CD4-positive, alpha-beta memory T cell (primary cell): ENCODE measurements at regions of chr19 and their contacts with region 1.

Region 1: DNA sequence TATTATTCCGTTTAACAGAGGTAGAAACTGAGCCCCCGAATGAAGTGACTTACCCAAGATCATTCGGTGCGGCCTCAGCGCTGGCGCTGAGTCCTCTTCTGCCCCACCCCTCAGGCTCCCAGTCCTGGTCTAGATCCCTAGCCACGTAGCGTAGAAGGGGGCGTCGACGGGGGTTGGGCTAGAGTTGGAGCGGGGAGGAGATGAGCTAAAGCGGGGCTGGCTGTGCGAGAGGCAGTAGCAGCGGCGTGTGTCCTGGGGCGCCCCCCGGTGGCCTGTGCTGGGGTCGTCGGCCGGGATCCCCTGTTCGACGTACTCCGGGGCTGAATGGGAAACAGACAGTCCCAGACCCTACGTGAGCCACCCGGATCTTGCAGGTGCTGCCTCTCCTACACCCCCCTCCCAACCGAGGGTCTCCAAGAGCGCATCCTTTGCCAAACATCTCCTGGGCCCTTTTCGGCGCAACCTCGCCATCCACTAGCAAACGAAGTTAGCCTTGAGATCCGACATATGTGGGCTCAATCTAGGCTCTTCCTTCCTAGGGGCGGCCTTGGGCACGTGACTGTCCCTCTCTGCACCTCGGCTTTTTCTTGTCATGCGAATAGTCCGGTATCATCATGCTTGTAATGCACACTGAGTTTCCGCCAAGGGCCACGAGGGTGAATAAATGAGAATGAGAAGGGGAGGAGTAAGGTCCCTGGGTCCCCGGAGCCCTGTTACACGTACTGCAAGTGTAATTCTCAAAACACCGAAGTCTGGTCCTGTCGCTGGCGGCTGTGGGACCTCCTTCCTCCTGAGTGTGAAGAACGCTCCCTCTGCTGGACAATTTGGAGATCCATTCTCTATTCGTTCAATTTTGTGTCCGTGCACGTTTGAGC is 47.7 kb downstream of the CYP4F22 start:
- DNase-seq: peak; percentile 92 to 97 (median 93)
- H3K4me3 ChIP-seq: peak overlapping the region; percentile 72 to 73
- H3K4me3 Mint-ChIP-seq: peak overlapping the region; percentile 78 to 90 (median 84)
- H3K27ac ChIP-seq: peak overlapping the region; percentile 58
- H3K27ac Mint-ChIP-seq: peak overlapping the region; percentile 81 to 96 (median 94)
- H3K4me1 ChIP-seq: peaks cover 21% of the 10 kb centered on the region
- H3K4me1 Mint-ChIP-seq: peaks cover 11 to 31% (median 20%) of the 10 kb centered on the region in 4 donors
- H3K27me3 ChIP-seq: no peaks in the 10 kb centered on the region
- H3K27me3 Mint-ChIP-seq: peaks cover 0 to 4% of the 10 kb centered on the region in 2 donors

Region 2: DNA sequence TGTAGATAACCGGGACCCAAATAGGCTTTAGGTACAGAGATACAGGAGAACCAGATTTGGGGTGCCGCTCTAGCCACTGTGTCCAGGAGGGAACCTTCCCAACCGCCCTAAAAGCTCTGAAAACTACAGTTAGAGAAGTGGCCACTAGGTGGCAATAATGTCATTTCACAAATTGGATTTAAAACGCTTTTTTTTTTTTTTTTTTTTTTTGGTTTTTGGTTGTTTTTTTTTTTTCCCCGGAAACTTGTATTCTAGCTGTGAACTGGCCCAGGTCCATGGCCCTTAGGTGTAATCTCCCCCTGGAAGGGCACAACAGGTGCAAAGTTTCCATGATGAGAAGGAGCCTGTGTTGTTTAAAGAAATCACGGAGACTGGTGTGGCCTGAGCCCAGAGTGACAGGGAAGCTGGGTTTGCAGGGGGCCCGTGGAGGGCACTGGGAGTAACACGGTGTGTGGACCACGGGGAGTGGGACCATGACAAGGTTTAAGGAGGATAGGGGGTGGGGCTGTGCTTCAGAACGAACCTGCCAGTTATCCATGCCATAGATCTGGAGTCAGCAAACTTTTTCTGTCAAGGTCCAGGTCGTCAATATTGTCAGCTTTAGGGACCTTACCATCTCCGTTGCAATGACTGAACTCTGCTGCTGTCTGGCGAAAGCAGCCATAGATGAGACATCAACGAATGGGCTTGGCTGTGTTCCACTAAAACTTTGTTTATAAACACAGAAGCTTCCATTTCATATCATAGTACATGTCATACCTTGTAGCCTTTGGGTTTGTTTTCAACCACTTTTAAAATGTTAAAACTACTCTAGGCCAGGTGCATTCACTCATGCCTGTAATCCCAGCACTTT is 463.9 kb before region 1 on chr19:
- CTCF ChIA-PET with region 1: interaction called, 5 read pairs
- POLR2A ChIA-PET with region 1: no interaction called
- intact Hi-C with region 1: loop called (anchors 1 kb)
- DNase-seq: peak; percentile 56 to 67 (median 65)
- H3K4me3 ChIP-seq: no peak overlapping the region
- H3K4me3 Mint-ChIP-seq: peak overlapping the region in 1 of 8 donors; percentile 8
- H3K27ac ChIP-seq: no peak overlapping the region
- H3K27ac Mint-ChIP-seq: peak overlapping the region in 2 of 7 donors; percentile 63 to 65
- H3K4me1 ChIP-seq: peaks cover 6% of the 10 kb centered on the region
- H3K4me1 Mint-ChIP-seq: peaks cover 0 to 4% (median 3%) of the 10 kb centered on the region in 4 donors
- H3K27me3 ChIP-seq: no peaks in the 10 kb centered on the region
- H3K27me3 Mint-ChIP-seq: peaks cover 5 to 9% of the 10 kb centered on the region in 2 donors

Region 3: DNA sequence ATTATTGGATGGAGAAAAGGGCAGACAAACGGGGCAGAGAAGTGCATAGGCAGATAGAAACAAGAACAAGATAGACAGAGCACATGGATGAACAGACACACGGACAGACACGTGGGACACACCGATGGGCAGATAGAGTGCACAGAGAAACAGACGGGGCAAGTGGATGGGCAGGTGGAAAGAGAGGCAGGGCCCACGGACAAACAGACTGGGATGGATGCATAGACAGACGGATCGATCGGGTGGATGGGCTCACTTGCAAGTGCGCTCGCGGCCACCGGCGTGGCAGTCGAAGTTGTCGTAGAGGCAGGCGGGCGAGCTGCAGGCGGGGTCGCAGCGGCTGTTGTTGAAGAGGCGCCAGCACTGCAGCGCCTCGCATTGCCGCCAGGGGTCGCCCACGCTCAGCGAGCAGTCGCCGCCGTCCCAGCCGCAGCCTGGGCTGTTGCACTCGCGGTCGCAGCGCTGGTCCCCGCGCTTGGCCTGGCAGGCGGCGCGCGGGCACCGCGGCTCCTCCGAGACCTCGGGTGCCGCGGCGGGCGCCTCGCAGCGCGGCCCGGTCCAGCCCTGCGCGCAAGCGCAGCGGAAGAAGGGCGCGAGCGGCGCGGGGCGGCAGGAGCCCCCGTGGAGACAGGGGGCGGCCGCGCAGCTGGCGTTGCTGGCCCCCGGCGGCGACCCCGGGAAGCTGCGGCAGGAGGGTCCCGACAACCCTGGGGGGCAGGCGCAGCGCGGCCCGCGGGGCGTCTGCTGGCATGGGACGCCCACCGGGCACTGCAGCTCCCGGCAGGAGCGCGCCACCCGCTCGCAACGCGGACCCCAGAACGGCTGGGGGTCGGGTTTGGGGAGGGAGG is 378.5 kb before region 1 on chr19:
- CTCF ChIA-PET with region 1: interaction called, 19 read pairs
- POLR2A ChIA-PET with region 1: interaction called, 3 read pairs
- intact Hi-C with region 1: no loop called
- DNase-seq: peak; percentile 69 to 83 (median 80)
- H3K4me3 ChIP-seq: no peak overlapping the region
- H3K4me3 Mint-ChIP-seq: peak overlapping the region in 5 of 8 donors; percentile 2 to 74 (median 57)
- H3K27ac ChIP-seq: no peak overlapping the region
- H3K27ac Mint-ChIP-seq: peak overlapping the region in 2 of 7 donors; percentile 30 to 75
- H3K4me1 ChIP-seq: peaks cover 3% of the 10 kb centered on the region
- H3K4me1 Mint-ChIP-seq: peaks cover 4 to 11% (median 6%) of the 10 kb centered on the region in 4 donors
- H3K27me3 ChIP-seq: no peaks in the 10 kb centered on the region
- H3K27me3 Mint-ChIP-seq: peaks cover 7 to 11% of the 10 kb centered on the region in 2 donors

Region 4: GRCh38 chr19:15264061-15264932 is 291.7 kb before region 1 on chr19:
- CTCF ChIA-PET with region 1: interaction called, 19 read pairs
- POLR2A ChIA-PET with region 1: no interaction called
- intact Hi-C with region 1: loop called (anchors 1 kb)
- DNase-seq: peak; percentile 51 to 66 (median 62)
- H3K4me3 ChIP-seq: no peak overlapping the region
- H3K4me3 Mint-ChIP-seq: no peak overlapping the region
- H3K27ac ChIP-seq: no peak overlapping the region
- H3K27ac Mint-ChIP-seq: peak overlapping the region in 2 of 7 donors; percentile 52 to 61
- H3K4me1 ChIP-seq: no peaks in the 10 kb centered on the region
- H3K4me1 Mint-ChIP-seq: peaks cover 2 to 13% (median 8%) of the 10 kb centered on the region in 4 donors
- H3K27me3 ChIP-seq: no peaks in the 10 kb centered on the region
- H3K27me3 Mint-ChIP-seq: no peaks in the 10 kb centered on the region

Region 5: DNA sequence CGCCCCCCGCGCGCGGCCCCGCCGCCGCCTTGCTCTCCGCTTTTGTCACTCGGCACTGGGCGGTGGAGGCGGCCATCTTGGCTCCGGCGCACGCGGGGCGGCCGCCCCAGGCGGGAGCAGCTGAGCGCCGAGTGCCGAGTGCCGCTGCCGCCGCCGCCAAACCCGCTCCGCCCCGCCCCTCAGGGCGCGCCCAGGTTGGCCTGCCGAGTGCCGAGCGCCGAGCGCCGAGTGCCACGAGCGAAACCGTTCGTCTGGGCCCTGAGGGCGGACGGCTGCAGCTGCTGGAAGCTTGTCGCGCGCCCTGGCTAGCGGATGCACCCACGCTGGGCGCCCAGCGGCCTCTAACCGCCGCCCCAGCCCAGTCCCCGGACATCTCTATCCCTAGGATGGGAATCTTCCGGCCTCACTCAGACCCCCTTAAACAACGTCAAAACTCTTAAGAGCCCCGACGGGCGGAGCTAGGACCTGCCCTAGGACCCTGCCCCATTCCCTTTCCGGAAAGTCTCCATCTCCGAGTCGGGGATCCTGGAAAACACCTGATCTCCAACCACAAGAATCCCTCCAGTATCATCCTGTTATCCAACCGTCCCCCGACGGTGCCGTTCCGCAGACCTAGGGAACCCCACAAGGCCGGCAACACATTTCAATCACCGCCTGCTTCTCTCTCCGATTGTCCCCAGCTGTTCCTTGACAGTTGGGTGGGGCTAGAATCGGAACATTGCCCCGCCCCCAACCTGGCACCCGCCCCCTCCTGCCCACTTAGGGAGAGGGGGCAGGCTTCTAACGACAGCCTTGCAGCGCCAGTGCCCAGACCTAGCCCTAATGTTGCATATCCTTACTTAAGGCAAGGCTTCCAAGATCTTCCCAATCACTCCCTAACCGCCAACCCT is 123.1 kb before region 1 on chr19:
- CTCF ChIA-PET with region 1: interaction called, 12 read pairs
- POLR2A ChIA-PET with region 1: interaction called, 40 read pairs
- intact Hi-C with region 1: loop called (anchors 1 kb)
- DNase-seq: peak; percentile 91 to 92 (median 91)
- H3K4me3 ChIP-seq: peak overlapping the region; percentile 78 to 91
- H3K4me3 Mint-ChIP-seq: peak overlapping the region; percentile 87 to 95 (median 92)
- H3K27ac ChIP-seq: peak overlapping the region; percentile 61
- H3K27ac Mint-ChIP-seq: peak overlapping the region; percentile 87 to 99 (median 94)
- H3K4me1 ChIP-seq: peaks cover 31% of the 10 kb centered on the region
- H3K4me1 Mint-ChIP-seq: peaks cover 21 to 44% (median 27%) of the 10 kb centered on the region in 4 donors
- H3K27me3 ChIP-seq: no peaks in the 10 kb centered on the region
- H3K27me3 Mint-ChIP-seq: no peaks in the 10 kb centered on the region

Region 6: GRCh38 chr19:15449620-15450527 is 106.1 kb before region 1 on chr19 and contains the start of gene WIZ:
- CTCF ChIA-PET with region 1: interaction called, 5 read pairs
- POLR2A ChIA-PET with region 1: interaction called, 15 read pairs
- intact Hi-C with region 1: no loop called
- DNase-seq: peak; percentile 83 to 90 (median 86)
- H3K4me3 ChIP-seq: peak within 1 kb of the TSS in 1 of 2 donors; percentile 63
- H3K4me3 Mint-ChIP-seq: peak within 1 kb of the TSS; percentile 79 to 91 (median 85)
- H3K27ac ChIP-seq: peak within 1 kb of the TSS; percentile 57
- H3K27ac Mint-ChIP-seq: peak within 1 kb of the TSS; percentile 89 to 98 (median 97)
- H3K4me1 ChIP-seq: peaks cover 21% of the 10 kb centered on the region
- H3K4me1 Mint-ChIP-seq: peaks cover 8 to 31% (median 24%) of the 10 kb centered on the region in 4 donors
- H3K27me3 ChIP-seq: no peaks in the 10 kb centered on the region
- H3K27me3 Mint-ChIP-seq: no peaks in the 10 kb centered on the region
- total RNA-seq, gene WIZ: 28.7 to 30.0 TPM

Region 7: DNA sequence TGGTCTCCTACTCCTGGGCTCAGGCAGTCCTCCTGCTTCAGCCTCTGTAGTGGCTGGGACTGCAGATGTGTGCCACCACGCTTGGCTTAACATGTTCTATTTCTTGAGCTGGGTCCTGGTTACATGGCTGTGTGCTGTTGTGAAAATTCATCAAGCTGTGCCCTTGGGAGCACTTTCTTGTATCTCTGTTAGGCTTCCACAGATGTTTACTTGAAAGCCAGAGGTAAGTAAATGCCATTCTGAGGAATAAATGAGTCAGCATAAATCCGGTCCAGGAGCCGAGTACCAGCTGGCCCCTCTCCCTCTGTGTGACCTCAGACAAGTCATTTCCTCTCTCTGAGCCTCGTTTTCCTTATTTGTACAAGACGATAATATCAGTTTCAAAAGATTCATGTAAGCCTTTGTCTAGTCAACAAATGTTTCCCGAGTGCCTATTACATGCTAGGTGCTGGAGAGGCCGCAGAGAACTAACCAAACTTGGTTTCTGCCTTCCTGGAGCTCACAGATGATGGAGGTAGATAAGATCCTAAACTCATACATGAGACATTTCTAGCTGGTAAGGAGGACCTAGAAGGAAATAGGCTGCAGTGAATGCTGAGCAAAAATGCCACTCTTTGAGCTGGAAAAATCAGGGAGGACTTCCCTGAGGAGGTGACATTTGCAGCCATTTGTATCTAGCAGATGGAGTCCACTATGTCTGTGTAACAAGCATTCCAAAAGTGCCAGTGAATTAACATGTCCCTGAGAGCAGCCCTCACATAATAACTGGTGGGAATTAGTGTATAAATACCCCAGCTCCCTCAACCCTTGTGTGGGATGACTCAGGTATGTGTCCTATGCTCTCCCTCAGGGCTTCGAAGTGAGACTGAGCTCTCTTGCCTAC is 88.9 kb before region 1 on chr19:
- CTCF ChIA-PET with region 1: interaction called, 106 read pairs
- POLR2A ChIA-PET with region 1: interaction called, 69 read pairs
- intact Hi-C with region 1: loop called (anchors 1 kb)
- DNase-seq: peak; percentile 56 to 89 (median 65)
- H3K4me3 ChIP-seq: no peak overlapping the region
- H3K4me3 Mint-ChIP-seq: peak overlapping the region; percentile 74 to 89 (median 78)
- H3K27ac ChIP-seq: peak overlapping the region; percentile 38
- H3K27ac Mint-ChIP-seq: peak overlapping the region; percentile 83 to 97 (median 91)
- H3K4me1 ChIP-seq: peaks cover 71% of the 10 kb centered on the region
- H3K4me1 Mint-ChIP-seq: peaks cover 38 to 74% (median 55%) of the 10 kb centered on the region in 4 donors
- H3K27me3 ChIP-seq: no peaks in the 10 kb centered on the region
- H3K27me3 Mint-ChIP-seq: no peaks in the 10 kb centered on the region

Region 8: DNA sequence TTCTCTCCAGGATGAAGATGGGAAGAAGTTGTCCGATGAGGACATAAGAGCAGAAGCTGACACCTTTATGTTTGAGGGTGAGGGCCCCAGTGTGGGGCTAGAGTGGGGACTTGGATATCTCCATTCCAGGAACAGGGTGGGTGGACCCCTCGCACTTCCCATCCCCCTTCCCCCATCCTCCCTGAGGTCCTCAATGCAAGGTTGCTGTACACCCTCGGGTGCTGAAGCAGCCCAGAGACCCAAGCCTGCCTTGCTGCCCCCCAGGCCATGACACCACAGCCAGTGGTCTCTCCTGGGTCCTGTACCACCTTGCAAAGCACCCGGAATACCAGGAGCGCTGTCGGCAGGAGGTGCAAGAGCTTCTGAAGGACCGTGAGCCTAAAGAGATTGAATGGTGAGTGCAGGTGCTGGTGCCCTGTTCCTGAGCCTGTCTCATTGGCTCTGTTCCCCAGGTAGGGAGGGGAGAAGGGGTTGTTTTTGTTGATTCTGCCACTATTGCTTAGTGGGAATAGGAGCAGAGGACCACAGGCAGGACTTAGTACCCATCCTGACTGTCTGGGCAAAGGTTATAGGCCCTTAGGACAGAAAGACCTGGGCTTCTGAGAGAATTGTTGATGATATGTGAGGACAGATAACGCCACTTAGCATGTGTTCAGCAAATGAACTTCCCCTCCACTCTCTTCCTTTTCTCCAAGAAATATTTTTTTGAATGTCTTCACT is 96.7 kb after region 1 on chr19:
- CTCF ChIA-PET with region 1: no interaction called
- POLR2A ChIA-PET with region 1: no interaction called
- intact Hi-C with region 1: no loop called
- DNase-seq: no peak
- H3K4me3 ChIP-seq: no peak overlapping the region
- H3K4me3 Mint-ChIP-seq: no peak overlapping the region
- H3K27ac ChIP-seq: no peak overlapping the region
- H3K27ac Mint-ChIP-seq: no peak overlapping the region
- H3K4me1 ChIP-seq: no peaks in the 10 kb centered on the region
- H3K4me1 Mint-ChIP-seq: no peaks in the 10 kb centered on the region
- H3K27me3 ChIP-seq: no peaks in the 10 kb centered on the region
- H3K27me3 Mint-ChIP-seq: peaks cover 24 to 29% of the 10 kb centered on the region in 2 donors